ENCODE measurements at regions of chr9 and their contacts with region 1.

Region 1: DNA sequence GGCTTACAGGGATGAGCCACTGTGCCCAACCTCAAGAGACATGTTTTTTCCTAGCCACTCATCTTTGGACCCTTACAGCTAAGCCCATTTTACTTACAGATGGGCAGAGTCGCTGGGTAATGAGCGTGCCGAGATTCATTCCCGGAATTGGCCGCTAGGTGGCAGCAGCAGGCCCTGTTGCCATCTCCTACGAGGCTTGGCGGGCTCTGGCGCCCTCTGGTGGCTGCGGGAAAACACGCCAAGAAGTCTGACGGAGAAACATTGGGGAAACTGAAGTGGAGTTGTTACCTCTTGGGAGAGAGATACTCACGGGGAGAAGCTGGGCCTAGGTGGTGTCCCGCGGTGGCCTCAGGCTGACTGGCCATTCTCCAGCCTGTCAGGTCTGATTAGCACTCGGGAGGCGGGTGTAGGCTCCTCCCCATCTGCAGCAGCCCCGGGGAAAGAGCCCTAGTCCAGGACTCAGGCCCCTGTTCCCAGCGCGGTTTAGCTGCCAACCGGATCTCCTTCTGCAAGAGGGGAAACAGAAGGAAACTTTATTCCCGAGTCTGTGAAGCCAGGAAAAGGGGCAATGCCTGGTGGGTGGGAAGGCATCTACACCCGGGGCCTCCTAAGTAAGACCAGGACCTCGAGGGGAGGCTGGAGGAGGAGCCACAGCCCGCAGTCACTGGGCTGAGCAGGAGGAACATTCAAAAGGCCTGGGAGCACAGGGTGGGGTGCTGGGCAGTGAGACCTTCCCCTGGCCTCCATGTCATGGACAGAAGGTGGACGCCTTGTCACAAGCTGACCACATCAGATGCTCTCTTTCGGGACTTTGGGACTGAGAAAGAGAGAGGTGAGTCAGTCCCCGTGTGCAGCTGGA is 9.7 kb downstream of the PTGES2 start:
- DNase-seq: peak; percentile 91 to 100
- H3K4me3 ChIP-seq: peak overlapping the region in 2 of 4 experiments; percentile 14 to 40; a peak in 5 of 8 replicates
- H3K27ac ChIP-seq: no peak overlapping the region
- H3K4me1 ChIP-seq: peaks cover 0 to 4% (median under 1%) of the 10 kb centered on the region in 4 experiments; a peak in 3 of 7 replicates
- H3K27me3 ChIP-seq: no peaks in the 10 kb centered on the region
- CTCF ChIP-seq: peak in 2 of 3 experiments; percentile 100; a peak in 3 of 4 replicates
- EP300 ChIP-seq: no peak
- POLR2A ChIP-seq: peak in 1 of 2 experiments; percentile 21; a peak in 1 of 3 replicates
- RAD21 ChIP-seq: peak; percentile 95

Region 2: GRCh38 chr9:127955294-127956035 is 162.4 kb before region 1 on chr9:
- CTCF ChIA-PET with region 1: interaction called, 18 read pairs
- POLR2A ChIA-PET with region 1: no interaction called
- DNase-seq: peak in 1 of 2 experiments; percentile 75
- H3K4me3 ChIP-seq: no peak overlapping the region
- H3K27ac ChIP-seq: 0 out of 2 replicates have a peak overlapping the region, but pooled peaks have one; percentile 12
- H3K4me1 ChIP-seq: peaks cover 0 to 11% (median 8%) of the 10 kb centered on the region in 4 experiments; a peak in 5 of 7 replicates
- H3K27me3 ChIP-seq: no peaks in the 10 kb centered on the region
- CTCF ChIP-seq: peak in 2 of 3 experiments; percentile 86 to 92; a peak in 3 of 4 replicates
- EP300 ChIP-seq: no peak
- POLR2A ChIP-seq: no peak
- RAD21 ChIP-seq: peak; percentile 62 to 75

Region 3: GRCh38 chr9:127968717-127969383 is 149.0 kb before region 1 on chr9:
- CTCF ChIA-PET with region 1: no interaction called
- POLR2A ChIA-PET with region 1: no interaction called
- DNase-seq: no peak
- H3K4me3 ChIP-seq: no peak overlapping the region
- H3K27ac ChIP-seq: no peak overlapping the region
- H3K4me1 ChIP-seq: peaks cover 0 to 58% (median 38%) of the 10 kb centered on the region in 4 experiments; a peak in 6 of 7 replicates
- H3K27me3 ChIP-seq: no peaks in the 10 kb centered on the region
- CTCF ChIP-seq: no peak
- EP300 ChIP-seq: no peak
- POLR2A ChIP-seq: no peak
- RAD21 ChIP-seq: no peak

Region 4: DNA sequence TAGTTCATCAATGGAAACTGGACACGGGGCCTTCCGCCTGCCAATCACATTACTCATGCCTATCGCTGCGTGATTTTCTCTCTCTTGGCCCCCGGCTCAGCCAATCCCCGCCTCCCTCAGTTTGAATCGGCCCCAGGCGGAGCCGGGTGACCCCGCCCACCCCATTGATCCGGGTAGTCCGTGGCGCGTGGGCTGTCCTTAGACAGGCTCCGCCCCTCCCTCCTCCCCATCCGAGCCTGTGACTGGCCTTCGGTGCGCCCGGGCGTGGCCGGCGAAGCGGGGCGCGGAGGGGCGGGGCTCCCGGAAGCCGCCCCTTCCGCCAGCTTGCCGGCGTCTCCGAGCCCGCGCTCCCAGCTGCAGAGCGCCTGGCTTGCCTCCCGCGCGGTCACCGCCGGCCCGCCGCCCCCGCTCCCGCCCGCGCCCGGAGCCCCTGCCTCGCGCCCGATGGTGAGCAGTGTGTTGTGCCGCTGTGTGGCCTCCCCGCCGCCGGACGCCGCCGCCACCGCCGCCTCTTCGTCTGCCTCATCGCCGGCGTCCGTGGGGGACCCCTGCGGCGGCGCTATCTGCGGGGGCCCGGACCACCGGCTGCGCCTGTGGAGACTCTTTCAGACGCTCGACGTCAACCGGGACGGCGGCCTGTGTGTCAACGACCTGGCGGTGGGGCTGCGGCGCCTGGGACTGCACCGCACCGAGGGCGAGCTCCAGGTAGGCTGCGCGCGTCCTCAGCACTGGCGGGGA is 49.8 kb before region 1 on chr9 and contains the start of gene SLC25A25:
- CTCF ChIA-PET with region 1: interaction called, 12 read pairs
- POLR2A ChIA-PET with region 1: interaction called, 4 read pairs
- DNase-seq: peak; percentile 98 to 100
- H3K4me3 ChIP-seq: peak within 1 kb of the TSS; percentile 75 to 84 (median 82)
- H3K27ac ChIP-seq: peak within 1 kb of the TSS; percentile 92
- H3K4me1 ChIP-seq: peaks cover 10 to 16% (median 12%) of the 10 kb centered on the region in 4 experiments
- H3K27me3 ChIP-seq: no peaks in the 10 kb centered on the region; a peak in 1 of 7 replicates
- CTCF ChIP-seq: no peak
- EP300 ChIP-seq: no peak
- POLR2A ChIP-seq: no peak
- RAD21 ChIP-seq: no peak
- total RNA-seq, gene SLC25A25: 16.8 and 18.5 TPM in 2 replicates

Region 5: GRCh38 chr9:128103589-128103962 is 14.3 kb before region 1 on chr9:
- CTCF ChIA-PET with region 1: interaction called, 114 read pairs
- POLR2A ChIA-PET with region 1: interaction called, 119 read pairs
- DNase-seq: peak in 1 of 2 experiments; percentile 58
- H3K4me3 ChIP-seq: no peak overlapping the region
- H3K27ac ChIP-seq: no peak overlapping the region
- H3K4me1 ChIP-seq: peaks cover 11 to 21% (median 15%) of the 10 kb centered on the region in 4 experiments
- H3K27me3 ChIP-seq: no peaks in the 10 kb centered on the region
- CTCF ChIP-seq: peak in 2 of 3 experiments; percentile 37 to 43; a peak in 3 of 4 replicates
- EP300 ChIP-seq: no peak
- POLR2A ChIP-seq: no peak; a peak in 1 of 3 replicates
- RAD21 ChIP-seq: peak; percentile 26 to 51; a peak in 3 of 4 replicates

Region 6: GRCh38 chr9:128136816-128137793 is 19.3 kb after region 1 on chr9:
- CTCF ChIA-PET with region 1: interaction called, 15 read pairs
- POLR2A ChIA-PET with region 1: no interaction called
- DNase-seq: no peak
- H3K4me3 ChIP-seq: no peak overlapping the region
- H3K27ac ChIP-seq: no peak overlapping the region
- H3K4me1 ChIP-seq: no peaks in the 10 kb centered on the region
- H3K27me3 ChIP-seq: no peaks in the 10 kb centered on the region
- CTCF ChIP-seq: no peak
- EP300 ChIP-seq: no peak
- POLR2A ChIP-seq: no peak
- RAD21 ChIP-seq: no peak

Measured in H1 (cell line).